PC-3 (cell line): ENCODE measurements at regions of chr5 and their contacts with region 1.

Region 1: GRCh38 chr5:161219818-161220217 is 326.7 kb downstream of the GABRB2 start:
- DNase-seq: no peak
- ATAC-seq: no peak
- H3K4me3 ChIP-seq: no peak overlapping the region
- H3K27ac ChIP-seq: no peak overlapping the region
- H3K4me1 ChIP-seq: no peaks in the 10 kb centered on the region
- H3K27me3 ChIP-seq: no peaks in the 10 kb centered on the region
- CTCF ChIP-seq: no peak

Region 2: GRCh38 chr5:161023551-161023950 is 196.3 kb before region 1 on chr5:
- CTCF ChIA-PET with region 1: no interaction called
- POLR2A ChIA-PET with region 1: no interaction called
- intact Hi-C with region 1: no loop called
- DNase-seq: no peak
- ATAC-seq: no peak
- H3K4me3 ChIP-seq: no peak overlapping the region
- H3K27ac ChIP-seq: no peak overlapping the region
- H3K4me1 ChIP-seq: no peaks in the 10 kb centered on the region
- H3K27me3 ChIP-seq: no peaks in the 10 kb centered on the region
- CTCF ChIP-seq: no peak

Region 3: GRCh38 chr5:161150441-161150988 is 69.3 kb before region 1 on chr5:
- CTCF ChIA-PET with region 1: no interaction called
- POLR2A ChIA-PET with region 1: no interaction called
- intact Hi-C with region 1: no loop called
- DNase-seq: no peak
- ATAC-seq: no peak
- H3K4me3 ChIP-seq: no peak overlapping the region
- H3K27ac ChIP-seq: no peak overlapping the region
- H3K4me1 ChIP-seq: no peaks in the 10 kb centered on the region
- H3K27me3 ChIP-seq: no peaks in the 10 kb centered on the region
- CTCF ChIP-seq: no peak

Region 4: GRCh38 chr5:161460741-161461140 is 240.9 kb after region 1 on chr5:
- CTCF ChIA-PET with region 1: no interaction called
- POLR2A ChIA-PET with region 1: no interaction called
- intact Hi-C with region 1: no loop called
- DNase-seq: no peak
- ATAC-seq: no peak
- H3K4me3 ChIP-seq: no peak overlapping the region
- H3K27ac ChIP-seq: no peak overlapping the region
- H3K4me1 ChIP-seq: no peaks in the 10 kb centered on the region
- H3K27me3 ChIP-seq: no peaks in the 10 kb centered on the region
- CTCF ChIP-seq: no peak

Region 5: GRCh38 chr5:162323471-162323870 is 1103.7 kb after region 1 on chr5:
- CTCF ChIA-PET with region 1: no interaction called
- POLR2A ChIA-PET with region 1: interaction called, 10 read pairs
- intact Hi-C with region 1: no loop called
- DNase-seq: peak; percentile 54
- ATAC-seq: no peak
- H3K4me3 ChIP-seq: no peak overlapping the region
- H3K27ac ChIP-seq: peak overlapping the region; percentile 28; the same call in 1 of the 2 replicates
- H3K4me1 ChIP-seq: no peaks in the 10 kb centered on the region
- H3K27me3 ChIP-seq: no peaks in the 10 kb centered on the region
- CTCF ChIP-seq: no peak